HAP-1 (cell line): ENCODE measurements at regions of chr7 and their contacts with region 1.

Region 1: DNA sequence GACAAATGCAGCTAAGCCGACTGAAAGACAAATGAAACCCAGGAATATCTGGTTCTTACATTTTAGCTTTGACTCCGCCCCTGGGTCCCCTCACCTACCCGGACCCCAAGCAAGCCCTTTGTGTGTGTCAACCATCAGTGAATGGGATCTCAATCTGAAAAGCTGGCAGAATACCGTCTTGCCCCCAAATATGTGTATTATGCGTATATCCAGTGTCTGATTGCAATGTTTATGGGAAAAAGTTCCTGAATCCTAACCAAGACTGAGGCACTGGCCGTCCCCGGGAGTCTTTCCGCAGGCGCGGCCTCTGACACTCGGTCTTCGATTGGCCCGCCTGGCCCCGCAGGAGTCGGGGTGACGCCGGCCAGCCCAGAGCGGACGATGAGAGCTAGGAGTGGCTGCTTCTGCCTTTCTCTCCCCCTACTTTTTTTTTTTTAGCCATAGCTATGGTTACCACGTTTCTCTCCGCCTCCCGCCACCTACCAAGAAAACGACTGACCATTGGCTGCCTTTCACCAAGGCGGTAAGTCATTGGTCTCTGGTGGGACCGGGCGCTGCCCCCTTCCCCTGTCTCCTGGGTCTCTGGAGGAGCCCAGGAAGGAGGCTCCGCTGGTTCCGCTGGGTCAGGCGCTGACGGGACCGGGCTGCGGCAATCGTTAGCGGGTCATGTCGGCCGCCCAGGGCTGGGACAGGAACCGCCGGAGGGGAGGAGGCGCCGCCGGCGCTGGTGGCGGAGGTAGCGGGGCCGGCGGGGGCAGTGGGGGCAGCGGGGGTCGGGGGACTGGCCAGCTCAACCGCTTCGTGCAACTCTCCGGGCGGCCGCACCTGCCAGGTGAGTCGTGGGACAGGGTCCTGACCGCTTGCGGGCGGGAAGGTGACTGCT is at the start of gene KLHDC10:
- DNase-seq: peak; percentile 96
- H3K4me3 ChIP-seq: peak within 1 kb of the TSS; percentile 80
- H3K4me1 ChIP-seq: peaks cover 17% of the 10 kb centered on the region
- H3K27me3 ChIP-seq: no peaks in the 10 kb centered on the region

Region 2: DNA sequence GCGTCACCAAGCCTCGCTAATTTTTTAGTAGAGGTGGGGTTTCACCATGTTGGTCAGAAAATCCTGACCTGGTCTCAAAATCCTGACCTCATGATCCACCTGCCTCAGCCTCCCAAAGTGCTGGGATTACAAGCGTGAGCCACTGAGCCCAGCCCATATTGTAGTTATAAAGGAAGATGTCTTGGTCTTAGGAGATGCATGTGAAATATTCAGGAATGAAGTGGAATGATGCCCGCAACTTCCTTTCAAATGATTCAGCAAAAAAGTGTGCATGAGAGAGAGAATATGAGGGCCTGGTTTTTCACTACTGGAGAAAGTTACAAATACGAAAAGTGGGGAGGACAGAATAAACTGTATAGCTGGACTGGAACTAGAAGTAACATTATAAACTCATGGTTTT is 119.1 kb after region 1 on chr7:
- in situ Hi-C with region 1: no loop called
- DNase-seq: no peak
- H3K4me3 ChIP-seq: no peak overlapping the region
- H3K4me1 ChIP-seq: no peaks in the 10 kb centered on the region
- H3K27me3 ChIP-seq: no peaks in the 10 kb centered on the region

Region 3: DNA sequence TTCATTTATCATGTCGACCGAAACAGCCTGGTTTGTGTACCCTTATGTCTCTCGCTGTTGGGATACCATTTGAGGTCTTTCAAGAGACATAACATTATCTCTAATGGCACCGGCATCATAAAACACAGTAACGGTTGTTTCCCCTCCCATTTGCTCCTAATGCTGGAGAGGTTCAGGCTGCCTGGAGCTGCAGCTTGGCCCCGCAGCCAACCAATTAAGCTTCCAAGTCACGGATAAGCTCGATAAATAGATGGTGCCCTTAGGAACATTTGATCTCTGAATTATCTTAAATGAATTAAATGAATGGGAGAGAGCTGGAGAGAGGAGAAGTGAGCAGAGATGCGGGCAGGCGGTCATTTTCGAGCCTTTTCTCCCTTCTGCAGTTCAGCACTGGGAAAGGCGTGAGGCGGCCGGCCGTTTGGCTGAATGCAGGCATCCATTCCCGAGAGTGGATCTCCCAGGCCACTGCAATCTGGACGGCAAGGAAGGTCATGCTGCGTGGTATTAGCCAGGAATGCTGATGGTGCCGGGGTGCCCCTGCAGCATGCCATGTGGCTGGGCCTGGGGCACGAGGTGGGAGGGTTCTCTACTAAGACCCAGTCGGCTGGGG is 235.3 kb after region 1 on chr7:
- in situ Hi-C with region 1: no loop called
- DNase-seq: no peak
- H3K4me3 ChIP-seq: no peak overlapping the region
- H3K4me1 ChIP-seq: no peaks in the 10 kb centered on the region
- H3K27me3 ChIP-seq: 0 out of 2 replicates have a peak, but pooled peaks cover 2% of the 10 kb centered on the region

Region 4: DNA sequence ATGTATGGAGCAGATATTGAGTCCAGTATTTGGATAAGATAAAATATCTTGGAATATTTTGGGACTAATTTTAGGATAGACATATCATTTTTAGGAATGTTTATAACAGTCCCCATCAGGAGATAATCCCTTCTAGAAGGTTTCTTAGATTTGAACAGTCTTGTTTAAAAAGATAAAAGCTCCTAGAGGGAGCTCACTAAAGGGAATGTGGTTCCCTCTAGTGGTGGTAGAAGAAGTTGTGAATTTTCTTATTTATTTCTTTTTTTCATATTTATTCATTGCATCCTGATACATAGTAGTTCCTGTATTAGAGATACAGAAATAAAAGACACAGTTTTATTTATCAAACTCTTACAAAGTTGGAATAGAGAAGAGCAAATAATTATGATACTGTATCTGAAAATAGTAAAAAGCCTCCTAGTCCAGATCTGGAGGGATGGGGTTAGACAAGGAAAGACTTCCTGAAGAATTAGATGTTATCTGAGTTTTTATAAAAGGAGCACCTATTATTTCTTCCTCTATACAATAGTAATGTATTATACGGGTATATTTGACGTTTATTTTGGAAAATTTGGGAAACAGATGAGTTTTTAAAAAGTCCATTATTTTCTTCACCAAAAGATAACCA is 688.3 kb after region 1 on chr7:
- in situ Hi-C with region 1: loop called (anchors 25 kb)
- DNase-seq: peak in 1 of 2 experiments; percentile 65
- H3K4me3 ChIP-seq: no peak overlapping the region
- H3K4me1 ChIP-seq: no peaks in the 10 kb centered on the region
- H3K27me3 ChIP-seq: peaks cover 4% of the 10 kb centered on the region

Region 5: GRCh38 chr7:130822642-130823041 is 752.4 kb after region 1 on chr7:
- in situ Hi-C with region 1: loop called (anchors 10 kb)
- DNase-seq: no peak
- H3K4me3 ChIP-seq: no peak overlapping the region
- H3K4me1 ChIP-seq: no peaks in the 10 kb centered on the region
- H3K27me3 ChIP-seq: no peaks in the 10 kb centered on the region